ENCODE measurements at regions of chr14 and their contacts with region 1.

Region 1: DNA sequence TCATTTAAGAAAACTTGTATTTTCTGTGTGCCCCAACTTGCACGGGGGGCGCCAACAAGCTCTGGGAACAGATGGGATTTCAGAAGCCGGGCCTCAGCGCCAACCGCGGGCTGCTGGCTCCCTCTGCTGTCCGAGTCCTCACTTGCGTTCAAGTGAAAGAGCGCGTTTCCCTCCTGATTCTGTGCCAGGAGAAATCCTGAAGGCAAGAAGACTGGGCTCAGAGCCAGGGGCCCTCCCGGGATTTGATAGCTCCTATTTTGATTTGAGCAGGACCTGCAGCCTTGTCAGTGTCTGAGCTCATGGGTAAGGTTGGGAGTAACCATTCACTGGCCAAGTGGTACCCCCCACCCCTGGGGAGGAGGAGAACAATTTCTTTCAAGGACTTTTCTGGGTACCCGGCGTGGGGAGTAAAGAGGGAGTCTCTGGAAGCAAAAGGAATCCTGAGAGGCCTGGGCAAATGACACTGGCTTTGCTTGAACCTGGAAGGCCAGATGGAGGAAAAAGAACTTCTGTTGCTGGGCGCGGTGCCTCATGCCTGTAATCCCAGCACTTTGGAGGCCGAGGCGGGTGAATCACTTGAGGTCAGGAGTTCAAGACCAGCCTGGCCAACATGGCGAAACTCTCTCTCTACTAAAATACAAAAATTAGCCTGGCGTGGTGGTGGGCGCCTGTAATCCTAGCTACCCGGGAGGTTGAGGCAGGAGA is 179.0 kb upstream of the RGS6 start:
- DNase-seq: peak; percentile 63 to 81 (median 66)
- ATAC-seq: peak; percentile 84
- H3K4me3 ChIP-seq: no peak overlapping the region
- H3K27ac ChIP-seq: no peak overlapping the region
- H3K4me1 ChIP-seq: peaks cover 22% of the 10 kb centered on the region in 2 experiments; a peak in 4 of 5 replicates
- H3K27me3 ChIP-seq: no peaks in the 10 kb centered on the region
- CTCF ChIP-seq: peak; percentile 83 to 97 (median 90)
- EP300 ChIP-seq: no peak
- POLR2A ChIP-seq: no peak
- RAD21 ChIP-seq: peak; percentile 90 to 93

Region 2: DNA sequence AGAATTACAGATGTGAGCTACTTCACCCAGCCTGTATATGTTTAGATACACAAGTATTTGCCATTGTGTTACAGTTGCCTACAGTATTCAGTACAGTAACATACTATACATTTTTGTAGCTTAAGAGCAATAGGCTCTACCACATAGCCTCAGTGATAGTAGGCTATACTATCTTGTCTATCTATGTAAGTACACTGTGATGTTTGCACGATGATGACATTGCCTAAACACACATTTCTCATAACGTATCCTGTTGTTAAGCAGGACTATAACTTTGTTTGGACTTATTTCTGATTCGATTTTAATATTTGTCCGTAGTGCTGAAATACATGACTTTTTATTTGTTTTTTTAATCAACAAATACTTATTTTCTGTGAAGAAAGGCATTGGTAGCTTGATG is 716.8 kb before region 1 on chr14:
- CTCF ChIA-PET with region 1: no interaction called
- POLR2A ChIA-PET with region 1: no interaction called
- in situ Hi-C with region 1: no loop called
- intact Hi-C with region 1: no loop called
- DNase-seq: no peak
- ATAC-seq: no peak
- H3K4me3 ChIP-seq: no peak overlapping the region
- H3K27ac ChIP-seq: no peak overlapping the region
- H3K4me1 ChIP-seq: no peaks in the 10 kb centered on the region
- H3K27me3 ChIP-seq: no peaks in the 10 kb centered on the region
- CTCF ChIP-seq: no peak
- EP300 ChIP-seq: no peak
- POLR2A ChIP-seq: no peak
- RAD21 ChIP-seq: no peak

Region 3: DNA sequence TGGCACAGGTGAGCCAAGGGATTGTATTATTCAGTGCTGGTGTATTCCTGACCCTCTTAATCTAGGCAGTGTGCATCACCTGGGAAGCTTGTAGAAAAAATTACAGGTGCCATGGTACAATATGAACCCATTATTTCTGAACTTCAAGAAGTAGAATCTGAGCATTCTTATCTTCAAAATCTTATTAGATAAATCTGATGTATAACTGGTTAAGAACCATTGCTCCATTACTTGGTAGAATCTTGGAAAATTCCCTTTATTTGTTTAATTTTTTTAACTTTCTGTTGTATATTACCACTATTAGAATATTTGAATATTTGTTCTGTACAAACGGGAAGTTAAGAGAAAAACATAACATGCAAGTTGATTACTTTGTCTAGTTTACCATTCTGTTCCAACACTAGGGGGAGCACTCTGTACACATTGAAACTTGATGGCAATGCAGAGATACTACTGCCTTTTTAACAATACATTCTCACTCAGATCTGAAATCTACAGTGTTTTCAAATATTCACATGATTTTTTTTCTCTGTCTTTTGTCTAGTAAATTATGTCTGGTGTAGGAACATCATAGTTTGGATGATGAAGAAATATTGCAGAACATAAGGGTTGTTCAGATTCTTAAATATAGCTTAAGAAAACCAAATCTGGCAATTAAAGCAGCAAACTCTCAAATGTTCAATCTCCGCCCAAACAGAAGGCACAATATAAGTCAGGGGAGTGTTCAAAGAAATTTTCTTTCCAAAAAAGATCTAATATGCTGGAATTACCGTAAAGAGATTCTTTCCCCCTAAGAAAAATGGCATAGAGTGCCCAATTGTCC is 649.4 kb before region 1 on chr14:
- CTCF ChIA-PET with region 1: interaction called, 15 read pairs
- POLR2A ChIA-PET with region 1: no interaction called
- in situ Hi-C with region 1: no loop called
- intact Hi-C with region 1: loop called (anchors 1 kb)
- DNase-seq: peak; percentile 32 to 59 (median 37)
- ATAC-seq: peak; percentile 66; the same call in 1 of the 3 replicates
- H3K4me3 ChIP-seq: no peak overlapping the region
- H3K27ac ChIP-seq: no peak overlapping the region
- H3K4me1 ChIP-seq: no peaks in the 10 kb centered on the region
- H3K27me3 ChIP-seq: no peaks in the 10 kb centered on the region
- CTCF ChIP-seq: peak; percentile 37 to 75 (median 38); a peak in 5 of 6 replicates
- EP300 ChIP-seq: no peak
- POLR2A ChIP-seq: no peak
- RAD21 ChIP-seq: peak; percentile 85 to 87

Region 4: GRCh38 chr14:71130491-71131179 is 622.6 kb before region 1 on chr14:
- CTCF ChIA-PET with region 1: no interaction called
- POLR2A ChIA-PET with region 1: no interaction called
- in situ Hi-C with region 1: loop called (anchors 5 kb)
- intact Hi-C with region 1: no loop called
- DNase-seq: peak in 1 of 4 experiments; percentile 76
- ATAC-seq: peak; percentile 93
- H3K4me3 ChIP-seq: peak overlapping the region; percentile 8; the same call in 1 of the 2 replicates
- H3K27ac ChIP-seq: peak overlapping the region; percentile 68
- H3K4me1 ChIP-seq: peaks cover 0 to 21% of the 10 kb centered on the region in 2 experiments; a peak in 4 of 5 replicates
- H3K27me3 ChIP-seq: no peaks in the 10 kb centered on the region
- CTCF ChIP-seq: no peak
- EP300 ChIP-seq: peak; percentile 70
- POLR2A ChIP-seq: no peak
- RAD21 ChIP-seq: no peak; a peak in 1 of 4 replicates

Region 5: DNA sequence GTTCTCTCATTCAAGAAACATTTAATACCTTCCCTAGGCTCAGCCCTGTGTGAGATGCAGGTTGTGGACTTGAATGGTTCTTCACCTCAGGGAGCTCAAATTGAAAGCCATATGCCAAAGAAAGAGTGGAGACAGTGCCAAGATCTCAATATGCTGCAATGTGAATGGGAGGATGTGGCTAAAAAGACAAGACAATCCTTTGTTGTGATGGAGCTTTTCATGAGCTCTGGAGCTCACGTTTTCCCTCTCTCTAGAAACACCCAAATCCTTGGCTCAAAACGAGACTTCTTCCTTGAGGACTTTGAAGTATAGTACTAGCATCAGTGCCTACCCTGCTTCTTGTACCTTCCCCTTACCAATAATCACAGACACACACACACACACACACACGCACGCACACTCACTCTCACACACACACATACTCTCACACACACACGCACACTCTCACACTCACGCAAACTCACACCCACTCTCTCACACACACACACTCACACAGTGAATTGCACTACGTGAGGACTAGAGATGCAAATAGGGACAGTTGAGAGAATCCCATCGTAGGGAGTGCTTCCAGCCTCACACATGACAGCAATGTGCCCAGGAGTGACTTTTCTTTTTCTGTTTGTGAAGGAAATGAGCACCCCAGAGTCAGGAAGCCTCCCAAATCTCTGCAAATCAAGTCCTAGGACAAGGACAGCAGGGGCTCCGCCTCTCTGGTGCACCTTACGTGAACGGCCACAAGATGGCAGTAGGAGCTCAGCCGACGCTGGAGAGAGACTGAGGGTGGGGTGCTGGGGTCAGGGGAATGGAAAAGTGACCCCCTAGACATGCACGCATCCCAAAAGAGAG is 614.6 kb before region 1 on chr14:
- CTCF ChIA-PET with region 1: interaction called, 20 read pairs
- POLR2A ChIA-PET with region 1: no interaction called
- in situ Hi-C with region 1: loop called (anchors 5 kb)
- intact Hi-C with region 1: loop called (anchors 5 kb)
- DNase-seq: peak; percentile 60 to 71 (median 66)
- ATAC-seq: peak; percentile 93
- H3K4me3 ChIP-seq: no peak overlapping the region
- H3K27ac ChIP-seq: no peak overlapping the region
- H3K4me1 ChIP-seq: peaks cover 0 to 8% of the 10 kb centered on the region in 2 experiments; a peak in 4 of 5 replicates
- H3K27me3 ChIP-seq: no peaks in the 10 kb centered on the region
- CTCF ChIP-seq: peak; percentile 70 to 80 (median 71)
- EP300 ChIP-seq: no peak
- POLR2A ChIP-seq: no peak
- RAD21 ChIP-seq: peak; percentile 71 to 87

Region 6: DNA sequence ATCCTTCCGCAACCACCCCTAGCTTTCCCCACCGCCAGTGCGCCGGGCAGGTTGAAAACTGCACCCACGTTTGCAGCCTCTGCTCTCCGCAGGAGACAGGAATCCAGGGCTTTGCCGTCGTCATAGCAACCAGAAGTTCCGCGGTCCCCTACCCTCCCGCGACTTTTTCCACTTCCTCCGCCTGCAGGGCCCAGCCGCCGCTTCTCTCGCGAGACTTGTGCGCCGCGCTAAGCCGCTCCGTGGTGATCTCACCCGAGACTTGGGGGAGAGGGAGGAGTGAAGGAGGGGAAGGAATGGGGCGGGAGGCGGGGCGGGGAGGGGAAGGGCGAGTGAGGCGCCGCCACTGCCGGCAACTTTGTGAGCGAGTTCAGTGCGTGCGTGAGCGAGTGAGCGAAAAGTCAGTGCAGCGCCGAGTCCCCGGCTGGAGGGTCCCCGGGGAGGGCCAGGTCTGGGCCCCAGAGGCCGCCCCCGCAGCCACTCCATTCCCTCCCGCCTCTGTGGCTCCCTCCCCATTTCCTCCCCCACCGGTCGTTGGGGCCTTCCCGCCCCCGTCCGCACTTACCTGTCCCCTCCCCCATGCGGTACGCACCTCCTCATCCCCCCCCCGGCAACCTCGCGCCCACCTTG is 433.1 kb before region 1 on chr14:
- CTCF ChIA-PET with region 1: interaction called, 3 read pairs
- POLR2A ChIA-PET with region 1: no interaction called
- in situ Hi-C with region 1: no loop called
- intact Hi-C with region 1: loop called (anchors 2 kb)
- DNase-seq: peak; percentile 92 to 95 (median 94)
- ATAC-seq: peak; percentile 92
- H3K4me3 ChIP-seq: peak within 1 kb of the TSS; percentile 81
- H3K27ac ChIP-seq: peak within 1 kb of the TSS; percentile 85
- H3K4me1 ChIP-seq: peaks cover 6 to 7% of the 10 kb centered on the region in 2 experiments
- H3K27me3 ChIP-seq: no peaks in the 10 kb centered on the region
- CTCF ChIP-seq: 0 out of 6 replicates have a peak, but pooled peaks of 1 of the 3 experiments have one; percentile 3
- EP300 ChIP-seq: no peak
- POLR2A ChIP-seq: peak; percentile 80
- RAD21 ChIP-seq: no peak

Region 7: GRCh38 chr14:71720978-71721624 is 32.2 kb before region 1 on chr14:
- CTCF ChIA-PET with region 1: interaction called, 3 read pairs
- POLR2A ChIA-PET with region 1: no interaction called
- in situ Hi-C with region 1: no loop called
- intact Hi-C with region 1: loop called (anchors 1 kb)
- DNase-seq: peak; percentile 29 to 71 (median 42)
- ATAC-seq: peak; percentile 94
- H3K4me3 ChIP-seq: no peak overlapping the region
- H3K27ac ChIP-seq: no peak overlapping the region
- H3K4me1 ChIP-seq: no peaks in the 10 kb centered on the region
- H3K27me3 ChIP-seq: no peaks in the 10 kb centered on the region
- CTCF ChIP-seq: peak; percentile 55 to 76 (median 69); a peak in 5 of 6 replicates
- EP300 ChIP-seq: no peak
- POLR2A ChIP-seq: no peak
- RAD21 ChIP-seq: peak; percentile 56 to 78

Region 8: DNA sequence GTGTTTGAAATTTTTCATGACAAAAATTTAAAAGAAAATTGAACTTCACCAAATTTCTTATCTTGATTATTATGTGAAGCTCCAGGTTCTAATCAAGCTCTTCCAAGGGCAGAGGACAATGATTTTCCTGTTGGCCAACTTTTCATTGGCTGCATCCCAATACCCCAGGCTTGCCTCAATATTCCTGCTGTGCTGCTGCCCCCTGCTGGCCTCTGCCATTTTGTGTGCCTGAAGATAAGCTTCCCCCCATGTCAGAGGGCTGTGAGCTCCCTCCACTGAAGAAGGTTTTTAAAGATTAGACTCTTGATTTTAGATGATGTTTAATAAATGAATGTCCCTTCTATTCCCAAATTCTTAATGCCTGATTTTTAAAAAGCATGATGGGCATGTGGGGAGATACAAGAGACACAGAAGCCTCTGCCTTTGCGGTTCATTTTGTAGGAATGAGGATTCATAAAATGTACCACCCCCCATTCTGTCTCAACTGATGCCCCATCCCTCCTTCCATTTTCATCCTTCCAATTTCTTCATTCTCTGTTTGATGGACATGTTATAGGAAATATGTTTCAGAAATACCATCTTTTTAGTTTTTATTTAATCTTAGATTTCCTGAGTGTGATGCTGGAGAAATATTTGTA is 102.2 kb after region 1 on chr14:
- CTCF ChIA-PET with region 1: no interaction called
- POLR2A ChIA-PET with region 1: no interaction called
- in situ Hi-C with region 1: no loop called
- intact Hi-C with region 1: loop called (anchors 5 kb)
- DNase-seq: peak; percentile 44 to 69 (median 52)
- ATAC-seq: peak; percentile 88
- H3K4me3 ChIP-seq: no peak overlapping the region
- H3K27ac ChIP-seq: no peak overlapping the region
- H3K4me1 ChIP-seq: no peaks in the 10 kb centered on the region; a peak in 1 of 5 replicates
- H3K27me3 ChIP-seq: no peaks in the 10 kb centered on the region
- CTCF ChIP-seq: peak; percentile 59 to 70 (median 65)
- EP300 ChIP-seq: no peak
- POLR2A ChIP-seq: no peak
- RAD21 ChIP-seq: peak; percentile 36 to 65; a peak in 3 of 4 replicates